H1 (cell line): ENCODE measurements at regions of chr9 and their contacts with region 1.

Region 1: DNA sequence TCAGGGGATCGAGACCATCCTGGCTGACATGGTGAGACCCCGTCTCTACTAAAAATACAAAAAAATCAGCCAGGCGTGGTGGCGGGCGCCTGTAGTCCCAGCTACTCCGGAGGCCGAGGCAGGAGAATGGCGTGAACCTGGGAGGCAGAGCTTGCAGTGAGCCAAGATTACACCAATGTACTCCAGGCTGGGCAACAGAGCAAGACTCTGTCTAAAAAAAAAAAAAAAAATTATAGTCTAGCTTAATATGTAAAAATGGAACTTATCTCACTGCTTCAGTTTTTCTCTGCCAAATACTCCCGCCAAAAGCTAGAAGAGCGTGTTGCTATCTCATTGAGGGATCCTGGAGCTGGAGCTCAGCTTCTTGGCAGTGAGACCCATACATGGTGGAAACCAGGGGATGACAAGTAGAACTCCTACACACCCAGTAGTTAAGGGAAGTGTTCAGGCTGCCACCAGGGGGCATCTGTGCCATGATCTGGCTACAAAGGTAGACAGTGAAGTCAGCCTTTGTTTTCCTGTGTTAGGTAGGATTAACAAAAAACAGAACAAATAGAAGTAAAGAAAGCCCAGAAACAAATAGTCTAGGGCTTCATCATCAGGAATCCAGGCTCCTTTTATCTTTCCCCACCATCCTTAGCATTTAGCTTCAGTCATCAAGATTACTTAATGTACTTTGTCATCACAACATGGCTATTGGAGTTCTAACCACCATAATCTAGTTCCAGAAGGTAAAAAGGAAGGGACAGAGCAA is 33.6 kb upstream of the GLIPR2 start:
- DNase-seq: peak; percentile 49 to 85
- H3K4me3 ChIP-seq: no peak overlapping the region
- H3K27ac ChIP-seq: no peak overlapping the region
- H3K4me1 ChIP-seq: peaks cover 0 to 3% (median 2%) of the 10 kb centered on the region in 4 experiments; a peak in 4 of 7 replicates
- H3K27me3 ChIP-seq: no peaks in the 10 kb centered on the region
- CTCF ChIP-seq: peak; percentile 71 to 89 (median 80)
- EP300 ChIP-seq: no peak
- POLR2A ChIP-seq: no peak
- RAD21 ChIP-seq: peak; percentile 78 to 83

Region 2: GRCh38 chr9:36074870-36075532 is 27.9 kb before region 1 on chr9:
- CTCF ChIA-PET with region 1: interaction called, 10 read pairs
- POLR2A ChIA-PET with region 1: interaction called, 3 read pairs
- DNase-seq: no peak
- H3K4me3 ChIP-seq: no peak overlapping the region
- H3K27ac ChIP-seq: no peak overlapping the region
- H3K4me1 ChIP-seq: no peaks in the 10 kb centered on the region
- H3K27me3 ChIP-seq: no peaks in the 10 kb centered on the region
- CTCF ChIP-seq: no peak
- EP300 ChIP-seq: no peak
- POLR2A ChIP-seq: no peak
- RAD21 ChIP-seq: no peak

Region 3: GRCh38 chr9:36116593-36116992 is 13.7 kb after region 1 on chr9:
- CTCF ChIA-PET with region 1: interaction called, 40 read pairs
- POLR2A ChIA-PET with region 1: interaction called, 6 read pairs
- DNase-seq: no peak
- H3K4me3 ChIP-seq: no peak overlapping the region
- H3K27ac ChIP-seq: no peak overlapping the region
- H3K4me1 ChIP-seq: no peaks in the 10 kb centered on the region
- H3K27me3 ChIP-seq: no peaks in the 10 kb centered on the region
- CTCF ChIP-seq: no peak
- EP300 ChIP-seq: no peak
- POLR2A ChIP-seq: no peak
- RAD21 ChIP-seq: no peak

Region 4: DNA sequence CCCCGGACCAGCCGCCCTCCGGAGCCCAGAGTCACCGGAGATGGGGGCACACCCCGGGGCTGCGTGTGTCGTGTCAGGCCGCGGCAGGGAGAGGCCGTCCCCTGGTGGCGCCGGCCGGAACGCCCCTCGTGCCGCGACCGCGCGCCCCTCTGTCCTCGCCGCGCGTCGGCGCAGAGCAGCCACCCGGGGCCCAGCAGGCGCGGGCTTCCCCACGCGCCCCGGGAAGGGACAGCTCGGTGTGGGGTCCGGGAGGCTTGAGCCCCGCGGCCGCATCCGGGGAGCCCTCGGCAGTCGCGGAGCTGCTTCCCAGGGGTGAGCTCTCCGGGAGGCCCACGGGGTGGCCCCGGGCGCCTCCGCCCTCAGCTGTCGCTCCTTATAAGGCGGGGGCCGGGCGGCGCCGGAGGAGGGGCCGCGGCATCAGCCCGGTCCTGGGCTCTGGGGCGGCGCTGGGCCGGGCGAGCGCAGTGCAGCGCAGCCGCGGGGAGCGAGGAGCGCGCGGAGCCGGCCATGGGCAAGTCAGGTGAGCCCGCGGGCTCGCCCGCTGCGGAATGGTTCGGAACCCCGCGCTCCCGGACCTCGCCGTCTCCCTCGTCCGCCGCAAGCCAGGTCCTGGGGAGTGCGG is 33.5 kb after region 1 on chr9 and contains the start of gene GLIPR2:
- CTCF ChIA-PET with region 1: interaction called, 24 read pairs
- POLR2A ChIA-PET with region 1: no interaction called
- DNase-seq: no peak
- H3K4me3 ChIP-seq: peak within 1 kb of the TSS; percentile 62 to 76 (median 70)
- H3K27ac ChIP-seq: no peak within 1 kb of the TSS
- H3K4me1 ChIP-seq: peaks cover 0 to 15% (median 7%) of the 10 kb centered on the region in 4 experiments; a peak in 6 of 7 replicates
- H3K27me3 ChIP-seq: peaks cover 18 to 58% (median 49%) of the 10 kb centered on the region in 4 experiments
- CTCF ChIP-seq: peak in 2 of 3 experiments; percentile 15 to 25; a peak in 2 of 4 replicates
- EP300 ChIP-seq: no peak
- POLR2A ChIP-seq: peak in 1 of 2 experiments; percentile 67; a peak in 2 of 3 replicates
- RAD21 ChIP-seq: peak in 1 of 2 experiments; percentile 18; a peak in 1 of 4 replicates
- total RNA-seq, gene GLIPR2: 7.9 and 8.9 TPM in 2 replicates

Region 5: DNA sequence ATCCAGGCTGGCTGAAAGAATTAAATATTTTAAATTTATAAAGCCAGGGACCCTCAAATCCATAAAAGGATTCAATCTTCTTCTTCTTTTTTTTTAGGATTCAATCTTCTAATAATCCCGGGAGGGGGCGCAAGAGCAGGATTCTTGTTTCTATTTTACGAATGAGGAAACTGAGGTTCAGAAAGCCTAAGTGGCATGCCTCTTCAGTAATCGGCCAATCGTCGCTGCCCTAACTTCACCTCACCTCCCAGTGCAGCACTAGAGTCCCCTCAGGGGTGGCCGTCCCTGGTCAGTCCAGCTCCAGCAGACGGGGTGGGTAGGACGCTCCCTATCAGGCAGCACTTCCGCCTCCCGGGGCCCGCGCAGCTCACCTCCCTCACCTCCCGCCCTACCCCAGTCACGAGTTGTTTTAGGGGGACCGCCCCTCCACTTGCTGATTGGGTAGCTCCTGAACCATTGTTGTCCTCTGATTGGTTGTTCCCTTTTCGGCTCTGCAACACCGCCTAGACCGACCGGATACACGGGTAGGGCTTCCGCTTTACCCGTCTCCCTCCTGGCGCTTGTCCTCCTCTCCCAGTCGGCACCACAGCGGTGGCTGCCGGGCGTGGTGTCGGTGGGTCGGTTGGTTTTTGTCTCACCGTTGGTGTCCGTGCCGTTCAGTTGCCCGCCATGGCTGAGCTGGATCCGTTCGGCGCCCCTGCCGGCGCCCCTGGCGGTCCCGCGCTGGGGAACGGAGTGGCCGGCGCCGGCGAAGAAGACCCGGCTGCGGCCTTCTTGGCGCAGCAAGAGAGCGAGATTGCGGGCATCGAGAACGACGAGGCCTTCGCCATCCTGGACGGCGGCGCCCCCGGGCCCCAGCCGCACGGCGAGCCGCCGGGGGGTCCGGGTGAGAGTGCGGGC is 87.7 kb after region 1 on chr9 and contains the start of gene CLTA:
- CTCF ChIA-PET with region 1: interaction called, 25 read pairs
- POLR2A ChIA-PET with region 1: interaction called, 3 read pairs
- DNase-seq: peak; percentile 92 to 93
- H3K4me3 ChIP-seq: peak within 1 kb of the TSS; percentile 86 to 98 (median 97)
- H3K27ac ChIP-seq: peak within 1 kb of the TSS; percentile 89
- H3K4me1 ChIP-seq: peaks cover 6 to 12% (median 10%) of the 10 kb centered on the region in 4 experiments; a peak in 6 of 7 replicates
- H3K27me3 ChIP-seq: no peaks in the 10 kb centered on the region
- CTCF ChIP-seq: peak in 1 of 3 experiments; percentile 35; a peak in 1 of 4 replicates
- EP300 ChIP-seq: no peak
- POLR2A ChIP-seq: peak; percentile 92 to 97
- RAD21 ChIP-seq: no peak
- total RNA-seq, gene CLTA: 236 and 239 TPM in 2 replicates